T-cell (primary cell): ENCODE measurements at regions of chr15 and their contacts with region 1.

Region 1: GRCh38 chr15:43824302-43825246 is at the start of gene MFAP1:
- DNase-seq: peak; percentile 74 to 98 (median 89)
- ATAC-seq: peak; percentile 89 to 93 (median 90)
- H3K4me3 ChIP-seq: peak within 1 kb of the TSS; percentile 96 to 99
- H3K4me3 Mint-ChIP-seq: peak within 1 kb of the TSS; percentile 98 to 99 (median 98)
- H3K27ac ChIP-seq: peak within 1 kb of the TSS; percentile 92
- H3K27ac Mint-ChIP-seq: peak within 1 kb of the TSS; percentile 97 to 98
- H3K4me1 ChIP-seq: peaks cover 32 to 58% of the 10 kb centered on the region in 2 experiments
- H3K4me1 Mint-ChIP-seq: peaks cover 54 to 76% (median 64%) of the 10 kb centered on the region in 3 donors
- H3K27me3 ChIP-seq: no peaks in the 10 kb centered on the region
- H3K27me3 Mint-ChIP-seq: no peaks in the 10 kb centered on the region
- total RNA-seq, gene MFAP1: 9.6 to 22.1 (median 21.0) TPM

Region 2: DNA sequence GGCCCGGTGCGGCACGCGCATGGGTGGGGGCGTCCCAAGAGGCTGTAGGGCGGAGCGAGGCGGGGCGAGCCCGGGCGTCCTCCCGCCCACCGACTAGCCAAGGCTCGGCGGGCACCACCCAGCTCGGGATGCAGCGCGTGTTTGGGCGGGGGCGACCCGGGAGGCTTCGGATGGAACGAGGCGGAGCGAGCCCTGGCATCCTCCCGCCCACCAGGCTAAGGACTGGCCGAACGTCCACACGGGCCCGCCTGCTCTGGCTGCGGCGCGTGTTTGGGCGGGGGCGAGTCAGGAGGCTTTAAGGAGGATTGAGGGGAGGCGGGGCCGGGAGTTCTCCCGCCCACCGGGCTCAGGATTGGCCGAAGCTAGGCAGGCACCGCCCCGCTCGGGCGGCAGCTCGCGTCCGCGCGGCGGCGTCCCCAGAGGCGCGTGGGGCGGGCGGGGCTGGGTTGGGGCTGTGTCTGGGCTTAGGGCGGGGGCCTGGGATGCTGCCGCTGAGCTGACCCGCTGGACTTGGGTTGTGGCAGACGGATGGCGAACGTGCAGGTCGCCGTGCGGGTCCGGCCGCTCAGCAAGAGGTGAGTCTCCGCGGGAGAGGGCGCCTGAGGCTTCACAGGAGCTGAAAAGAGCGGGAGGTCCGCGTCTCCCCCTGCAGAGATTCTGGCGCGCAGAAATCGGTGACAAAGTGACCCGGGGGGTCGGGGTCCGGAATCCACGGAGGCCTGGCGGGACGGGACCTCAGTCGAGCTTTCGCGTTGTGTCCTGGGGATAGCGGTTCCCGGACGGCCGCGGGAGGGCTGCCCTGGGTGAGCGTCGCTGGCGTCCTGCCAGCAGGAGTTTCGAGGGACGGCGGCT is 1249.2 kb before region 1 on chr15 and contains the start of gene STARD9:
- CTCF ChIA-PET with region 1: no interaction called
- POLR2A ChIA-PET with region 1: interaction called in 1 of 2 experiments, 10 read pairs
- DNase-seq: peak; percentile 82 to 95 (median 90)
- ATAC-seq: peak; percentile 91 to 97 (median 94)
- H3K4me3 ChIP-seq: peak within 1 kb of the TSS; percentile 78 to 80
- H3K4me3 Mint-ChIP-seq: peak within 1 kb of the TSS; percentile 88 to 92 (median 91)
- H3K27ac ChIP-seq: peak within 1 kb of the TSS; percentile 47
- H3K27ac Mint-ChIP-seq: peak within 1 kb of the TSS; percentile 71 to 84
- H3K4me1 ChIP-seq: peaks cover 2 to 18% of the 10 kb centered on the region in 2 experiments
- H3K4me1 Mint-ChIP-seq: peaks cover 10 to 22% (median 16%) of the 10 kb centered on the region in 3 donors
- H3K27me3 ChIP-seq: peaks cover 0 to 2% of the 10 kb centered on the region in 2 experiments
- H3K27me3 Mint-ChIP-seq: peaks cover 14% of the 10 kb centered on the region in 2 donors
- total RNA-seq, gene STARD9: 6.6 to 10.6 (median 8.8) TPM

Region 3: DNA sequence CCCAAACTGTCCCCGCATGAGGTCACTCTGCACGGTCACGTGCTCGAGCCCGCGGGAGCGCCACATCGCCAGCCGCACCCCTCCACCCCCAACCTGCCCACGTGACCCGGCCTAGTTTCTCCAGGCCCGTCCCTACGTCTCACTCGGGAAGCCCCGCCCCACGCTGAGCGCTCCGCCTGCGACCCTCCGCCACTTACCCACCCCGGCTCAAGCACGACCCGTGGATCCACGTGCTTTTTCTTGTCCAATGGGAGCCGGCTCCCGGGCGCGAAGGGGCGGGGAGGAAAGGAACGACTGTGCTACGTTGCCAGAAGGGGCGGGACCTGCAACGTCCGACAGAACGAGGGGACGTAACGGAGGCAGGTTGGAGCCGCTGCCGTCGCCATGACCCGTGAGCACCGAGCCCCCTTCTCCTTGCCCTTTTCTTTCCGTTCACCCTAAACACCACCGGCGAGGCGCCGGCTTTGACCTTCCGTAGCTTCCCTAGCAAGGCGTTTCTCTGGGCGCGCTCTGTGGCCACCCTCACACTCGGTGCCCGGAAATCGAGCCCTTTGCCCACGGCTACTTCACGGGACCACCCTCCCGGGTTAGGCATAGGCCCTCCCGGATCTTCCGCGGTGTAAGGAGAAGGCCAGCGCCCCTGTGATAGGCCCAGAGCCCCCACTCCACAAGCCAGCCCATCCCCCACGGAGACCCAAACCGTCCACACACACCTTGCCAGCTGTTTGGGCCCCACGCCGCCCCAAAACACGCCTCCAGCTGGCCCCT is 32.4 kb before region 1 on chr15 and contains the start of gene SERF2:
- CTCF ChIA-PET with region 1: interaction called in 1 of 2 experiments, 3 read pairs
- POLR2A ChIA-PET with region 1: interaction called, 4 to 10 read pairs
- DNase-seq: peak; percentile 97 to 100 (median 99)
- ATAC-seq: peak; percentile 94 to 97 (median 96)
- H3K4me3 ChIP-seq: peak within 1 kb of the TSS; percentile 93 to 99
- H3K4me3 Mint-ChIP-seq: peak within 1 kb of the TSS; percentile 89 to 95 (median 93)
- H3K27ac ChIP-seq: peak within 1 kb of the TSS; percentile 94
- H3K27ac Mint-ChIP-seq: peak within 1 kb of the TSS; percentile 95 to 97
- H3K4me1 ChIP-seq: peaks cover 19 to 35% of the 10 kb centered on the region in 2 experiments
- H3K4me1 Mint-ChIP-seq: peaks cover 41 to 49% (median 48%) of the 10 kb centered on the region in 3 donors
- H3K27me3 ChIP-seq: no peaks in the 10 kb centered on the region
- H3K27me3 Mint-ChIP-seq: no peaks in the 10 kb centered on the region
- total RNA-seq, gene SERF2: 397 to 586 (median 532) TPM

Region 4: DNA sequence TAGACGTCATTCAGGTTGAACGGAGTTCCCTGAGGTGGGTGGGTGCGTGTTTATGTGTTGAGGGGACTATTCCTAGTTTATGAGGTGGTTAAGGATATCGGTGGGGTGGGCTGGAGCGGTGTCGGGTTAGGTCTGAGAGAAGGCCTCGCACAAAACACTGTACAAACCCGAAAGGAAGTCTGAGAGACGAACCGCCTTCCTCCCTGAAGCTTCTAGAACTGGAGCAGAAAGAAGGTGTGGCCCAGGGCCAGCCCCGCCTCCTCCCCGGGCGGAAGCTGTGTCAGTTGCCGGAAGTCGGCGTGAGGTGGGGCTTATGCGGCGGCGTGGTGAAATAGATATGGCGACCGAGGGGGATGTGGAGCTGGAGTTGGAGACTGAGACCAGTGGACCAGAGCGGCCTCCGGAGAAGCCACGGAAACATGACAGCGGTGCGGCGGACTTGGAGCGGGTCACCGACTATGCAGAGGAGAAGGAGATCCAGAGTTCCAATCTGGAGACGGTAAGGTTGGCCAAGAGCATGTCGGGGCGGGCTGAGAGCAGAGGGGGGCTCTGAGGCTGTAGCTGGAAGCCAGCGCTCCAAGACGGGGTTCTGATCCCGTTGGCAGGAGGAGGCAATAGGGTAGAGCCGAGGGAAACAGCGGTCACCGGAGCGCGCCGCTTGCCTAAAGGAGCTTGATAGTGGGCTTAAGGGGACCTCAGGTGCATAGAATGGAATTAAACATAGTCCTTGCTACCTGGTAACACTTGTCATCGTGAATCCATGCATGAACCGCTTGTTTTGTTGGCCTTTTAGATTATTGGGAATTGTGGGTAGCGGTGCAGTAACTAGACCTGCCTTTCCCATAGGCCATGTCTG is 24.1 kb before region 1 on chr15 and contains the start of gene HYPK:
- CTCF ChIA-PET with region 1: interaction called in 1 of 2 experiments, 5 read pairs
- POLR2A ChIA-PET with region 1: interaction called, 7 to 11 read pairs
- DNase-seq: peak; percentile 84 to 95 (median 92)
- ATAC-seq: peak; percentile 96 to 99 (median 98)
- H3K4me3 ChIP-seq: peak within 1 kb of the TSS; percentile 80 to 90
- H3K4me3 Mint-ChIP-seq: peak within 1 kb of the TSS; percentile 97 to 99 (median 99)
- H3K27ac ChIP-seq: peak within 1 kb of the TSS; percentile 77
- H3K27ac Mint-ChIP-seq: peak within 1 kb of the TSS; percentile 98
- H3K4me1 ChIP-seq: peaks cover 15 to 23% of the 10 kb centered on the region in 2 experiments
- H3K4me1 Mint-ChIP-seq: peaks cover 49 to 54% (median 53%) of the 10 kb centered on the region in 3 donors
- H3K27me3 ChIP-seq: no peaks in the 10 kb centered on the region
- H3K27me3 Mint-ChIP-seq: no peaks in the 10 kb centered on the region
- total RNA-seq, gene HYPK: 19.2 to 23.6 (median 21.8) TPM

Region 5: GRCh38 chr15:43895586-43895985 is 71.0 kb after region 1 on chr15:
- CTCF ChIA-PET with region 1: no interaction called
- POLR2A ChIA-PET with region 1: interaction called in 1 of 2 experiments, 19 read pairs
- DNase-seq: no peak
- ATAC-seq: no peak
- H3K4me3 ChIP-seq: no peak overlapping the region
- H3K4me3 Mint-ChIP-seq: no peak overlapping the region
- H3K27ac ChIP-seq: no peak overlapping the region
- H3K27ac Mint-ChIP-seq: no peak overlapping the region
- H3K4me1 ChIP-seq: no peaks in the 10 kb centered on the region
- H3K4me1 Mint-ChIP-seq: no peaks in the 10 kb centered on the region
- H3K27me3 ChIP-seq: no peaks in the 10 kb centered on the region
- H3K27me3 Mint-ChIP-seq: no peaks in the 10 kb centered on the region